Heart right ventricle (tissue), 16 donors: ENCODE measurements at regions of chr10 and their contacts with region 1.

Region 1: GRCh38 chr10:122112625-122113160 is 123.7 kb downstream of the TACC2 start:
- DNase-seq: peak; percentile 86 to 87
- ATAC-seq: peak; percentile 74 to 91 (median 88)
- H3K4me3 ChIP-seq: peak overlapping the region; percentile 53 to 94 (median 70)
- H3K27ac ChIP-seq: peak overlapping the region; percentile 94 to 100 (median 98)
- H3K4me1 ChIP-seq: peaks cover 5 to 58% (median 50%) of the 10 kb centered on the region in 9 donors
- H3K27me3 ChIP-seq: peaks cover 0 to 30% (median 0%) of the 10 kb centered on the region in 7 donors
- CTCF ChIP-seq: peak; percentile 31 to 78 (median 50)

Region 2: DNA sequence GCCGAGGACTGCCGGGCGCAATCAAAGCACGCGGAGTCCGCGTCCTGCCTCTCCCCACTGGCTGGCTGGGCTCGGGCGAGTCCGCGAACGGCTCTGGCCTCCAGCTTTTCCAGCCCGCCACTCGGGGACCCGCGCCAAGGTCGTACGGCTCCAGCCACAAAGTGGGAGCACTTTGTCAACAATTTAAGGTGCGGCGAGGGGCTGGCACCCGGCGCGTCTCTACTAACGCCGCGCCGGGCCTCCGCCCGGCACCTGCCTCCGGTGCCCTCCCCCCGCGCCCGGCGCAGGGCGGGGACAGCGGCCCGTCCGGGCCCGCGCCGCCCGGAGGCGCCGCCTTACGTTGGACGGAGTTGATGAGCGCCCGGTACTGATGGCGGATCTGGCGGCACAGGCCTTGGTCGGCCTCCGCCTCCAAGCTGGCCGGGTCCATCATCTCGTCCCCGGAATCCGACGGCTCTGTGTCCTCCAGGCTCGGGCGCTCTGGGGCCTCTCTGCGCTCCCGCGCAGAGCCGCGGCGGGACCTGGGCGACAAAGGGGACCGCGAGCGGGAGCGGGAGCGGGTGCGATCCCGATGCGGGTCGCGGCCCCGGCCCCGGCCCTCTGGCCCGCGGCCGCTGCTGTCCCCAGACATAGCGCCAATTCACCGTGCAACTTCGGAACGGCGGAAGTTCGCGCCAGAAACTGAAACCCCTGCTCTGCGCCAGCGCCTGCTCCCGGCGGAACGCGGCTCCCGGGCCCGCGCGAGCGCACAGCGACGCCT is 138.0 kb before region 1 on chr10 and contains the start of gene NSMCE4A:
- intact Hi-C with region 1: loop called in 1 of 10 experiments (anchors 5 kb)
- DNase-seq: peak; percentile 81 to 86
- ATAC-seq: peak; percentile 90 to 96 (median 93)
- H3K4me3 ChIP-seq: peak within 1 kb of the TSS; percentile 67 to 99 (median 88)
- H3K27ac ChIP-seq: peak within 1 kb of the TSS; percentile 91 to 99 (median 98)
- H3K4me1 ChIP-seq: peaks cover 0 to 30% (median 23%) of the 10 kb centered on the region in 9 donors
- H3K27me3 ChIP-seq: no peaks in the 10 kb centered on the region
- CTCF ChIP-seq: peak in 4 of 9 donors; percentile 66 to 87 (median 76)
- total RNA-seq, gene NSMCE4A: 18.2 to 35.4 (median 24.4) TPM

Region 3: GRCh38 chr10:122034149-122034756 is 78.4 kb before region 1 on chr10:
- intact Hi-C with region 1: no loop called
- DNase-seq: no peak
- ATAC-seq: no peak
- H3K4me3 ChIP-seq: no peak overlapping the region
- H3K27ac ChIP-seq: peak overlapping the region in 7 of 10 donors; percentile 33 to 85 (median 78)
- H3K4me1 ChIP-seq: peaks cover 0 to 69% (median 34%) of the 10 kb centered on the region in 9 donors
- H3K27me3 ChIP-seq: peaks cover 0 to 4% (median 0%) of the 10 kb centered on the region in 7 donors
- CTCF ChIP-seq: no peak

Region 4: GRCh38 chr10:122051251-122051996 is 61.3 kb before region 1 on chr10:
- intact Hi-C with region 1: loop called in 8 of 10 experiments (anchors 1 to 10 kb)
- DNase-seq: peak; percentile 30 to 38
- ATAC-seq: peak in 5 of 8 donors; percentile 28 to 43 (median 30)
- H3K4me3 ChIP-seq: no peak overlapping the region
- H3K27ac ChIP-seq: peak overlapping the region in 7 of 10 donors; percentile 20 to 72 (median 40)
- H3K4me1 ChIP-seq: peaks cover 13 to 62% (median 34%) of the 10 kb centered on the region in 9 donors
- H3K27me3 ChIP-seq: no peaks in the 10 kb centered on the region
- CTCF ChIP-seq: peak; percentile 42 to 77 (median 68)

Region 5: GRCh38 chr10:122062831-122063674 is 49.6 kb before region 1 on chr10:
- intact Hi-C with region 1: loop called in 4 of 10 experiments (anchors 2 to 10 kb)
- DNase-seq: peak; percentile 80 to 85
- ATAC-seq: peak; percentile 94 to 100 (median 97)
- H3K4me3 ChIP-seq: no peak overlapping the region
- H3K27ac ChIP-seq: peak overlapping the region; percentile 74 to 91 (median 84)
- H3K4me1 ChIP-seq: peaks cover 6 to 40% (median 15%) of the 10 kb centered on the region in 9 donors
- H3K27me3 ChIP-seq: no peaks in the 10 kb centered on the region
- CTCF ChIP-seq: no peak

Region 6: GRCh38 chr10:122126763-122127659 is 14.3 kb after region 1 on chr10:
- intact Hi-C with region 1: no loop called
- DNase-seq: peak in 1 of 2 donors; percentile 58
- ATAC-seq: peak; percentile 63 to 90 (median 86)
- H3K4me3 ChIP-seq: peak overlapping the region in 4 of 10 donors; percentile 21 to 41 (median 38)
- H3K27ac ChIP-seq: peak overlapping the region; percentile 38 to 94 (median 84)
- H3K4me1 ChIP-seq: peaks cover 29 to 83% (median 58%) of the 10 kb centered on the region in 9 donors
- H3K27me3 ChIP-seq: no peaks in the 10 kb centered on the region
- CTCF ChIP-seq: no peak

Region 7: GRCh38 chr10:122221958-122222357 is 109.3 kb after region 1 on chr10:
- intact Hi-C with region 1: no loop called
- DNase-seq: no peak
- ATAC-seq: peak in 3 of 8 donors; percentile 18 to 68 (median 48)
- H3K4me3 ChIP-seq: no peak overlapping the region
- H3K27ac ChIP-seq: no peak overlapping the region
- H3K4me1 ChIP-seq: peaks cover 0 to 3% (median 0%) of the 10 kb centered on the region in 9 donors
- H3K27me3 ChIP-seq: no peaks in the 10 kb centered on the region
- CTCF ChIP-seq: no peak